ENCODE measurements at regions of chr3 and their contacts with region 1.

Region 1: DNA sequence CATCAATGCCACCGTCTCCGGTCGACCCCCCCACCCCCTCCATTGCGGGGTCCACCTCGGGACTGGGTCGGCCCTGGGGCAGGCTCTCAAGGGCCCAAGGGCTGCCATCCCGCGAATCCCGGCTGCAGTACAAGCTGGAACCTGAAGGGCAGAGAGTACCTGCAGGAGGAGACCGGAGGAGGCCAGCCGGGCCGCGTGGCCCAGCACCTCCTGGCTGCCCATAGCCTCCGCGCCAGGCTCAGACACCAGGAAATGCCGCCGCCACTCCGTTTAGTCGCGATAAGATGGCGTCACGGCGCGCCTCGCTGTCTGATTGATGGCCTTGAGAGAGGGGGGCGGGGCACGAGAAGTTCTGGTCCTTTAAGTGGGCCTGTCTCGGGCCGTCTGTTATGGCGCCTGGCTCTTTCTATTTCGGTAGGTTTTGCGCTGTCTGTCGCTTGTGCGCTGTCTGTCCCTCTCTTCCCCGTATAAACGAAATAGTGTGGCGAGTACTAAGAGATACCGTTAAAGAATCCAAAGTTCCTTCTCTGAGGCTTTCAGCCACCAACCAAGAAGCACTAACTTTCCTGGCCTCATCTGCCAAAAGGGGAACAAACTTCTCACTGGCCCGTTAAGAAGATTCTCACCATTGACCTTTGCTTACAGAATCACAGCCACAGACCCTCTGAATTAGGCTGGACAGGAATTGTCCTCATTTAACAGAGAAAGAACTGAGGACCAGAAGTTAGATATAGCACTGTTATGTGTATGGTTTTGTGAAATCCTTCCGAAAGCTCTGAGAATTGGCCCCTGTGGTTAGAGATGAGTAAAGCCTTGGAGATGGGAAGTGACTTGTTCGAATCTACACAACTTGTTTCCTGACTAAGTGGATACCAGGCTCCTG is at the start of gene RFT1:
- DNase-seq: peak; percentile 94 to 98 (median 96)
- ATAC-seq: peak; percentile 97
- H3K4me3 ChIP-seq: peak within 1 kb of the TSS; percentile 62
- H3K4me3 Mint-ChIP-seq: peak within 1 kb of the TSS; percentile 87 to 98 (median 92)
- H3K27ac ChIP-seq: peak within 1 kb of the TSS; percentile 82
- H3K27ac Mint-ChIP-seq: peak within 1 kb of the TSS; percentile 91 to 100 (median 98)
- H3K4me1 ChIP-seq: peaks cover 15 to 19% of the 10 kb centered on the region in 2 donors
- H3K4me1 Mint-ChIP-seq: peaks cover 14 to 39% (median 26%) of the 10 kb centered on the region in 7 donors
- H3K27me3 ChIP-seq: no peaks in the 10 kb centered on the region
- H3K27me3 Mint-ChIP-seq: no peaks in the 10 kb centered on the region
- total RNA-seq, gene RFT1: 16.0 to 32.0 (median 26.0) TPM

Region 2: GRCh38 chr3:52897130-52898122 is 233.0 kb before region 1 on chr3 and contains the start of gene STIMATE:
- CTCF ChIA-PET with region 1: no interaction called
- POLR2A ChIA-PET with region 1: no interaction called
- intact Hi-C with region 1: loop called in 1 of 2 experiments (anchors 1 kb)
- DNase-seq: peak; percentile 77 to 89 (median 86)
- ATAC-seq: peak; percentile 97
- H3K4me3 ChIP-seq: peak within 1 kb of the TSS; percentile 85
- H3K4me3 Mint-ChIP-seq: peak within 1 kb of the TSS; percentile 90 to 99 (median 95)
- H3K27ac ChIP-seq: peak within 1 kb of the TSS; percentile 72
- H3K27ac Mint-ChIP-seq: peak within 1 kb of the TSS; percentile 44 to 97 (median 86)
- H3K4me1 ChIP-seq: peaks cover 16 to 23% of the 10 kb centered on the region in 2 donors
- H3K4me1 Mint-ChIP-seq: peaks cover 37 to 51% (median 45%) of the 10 kb centered on the region in 7 donors
- H3K27me3 ChIP-seq: no peaks in the 10 kb centered on the region
- H3K27me3 Mint-ChIP-seq: no peaks in the 10 kb centered on the region
- total RNA-seq, gene STIMATE: 21.1 to 44.9 (median 34.5) TPM

Region 3: DNA sequence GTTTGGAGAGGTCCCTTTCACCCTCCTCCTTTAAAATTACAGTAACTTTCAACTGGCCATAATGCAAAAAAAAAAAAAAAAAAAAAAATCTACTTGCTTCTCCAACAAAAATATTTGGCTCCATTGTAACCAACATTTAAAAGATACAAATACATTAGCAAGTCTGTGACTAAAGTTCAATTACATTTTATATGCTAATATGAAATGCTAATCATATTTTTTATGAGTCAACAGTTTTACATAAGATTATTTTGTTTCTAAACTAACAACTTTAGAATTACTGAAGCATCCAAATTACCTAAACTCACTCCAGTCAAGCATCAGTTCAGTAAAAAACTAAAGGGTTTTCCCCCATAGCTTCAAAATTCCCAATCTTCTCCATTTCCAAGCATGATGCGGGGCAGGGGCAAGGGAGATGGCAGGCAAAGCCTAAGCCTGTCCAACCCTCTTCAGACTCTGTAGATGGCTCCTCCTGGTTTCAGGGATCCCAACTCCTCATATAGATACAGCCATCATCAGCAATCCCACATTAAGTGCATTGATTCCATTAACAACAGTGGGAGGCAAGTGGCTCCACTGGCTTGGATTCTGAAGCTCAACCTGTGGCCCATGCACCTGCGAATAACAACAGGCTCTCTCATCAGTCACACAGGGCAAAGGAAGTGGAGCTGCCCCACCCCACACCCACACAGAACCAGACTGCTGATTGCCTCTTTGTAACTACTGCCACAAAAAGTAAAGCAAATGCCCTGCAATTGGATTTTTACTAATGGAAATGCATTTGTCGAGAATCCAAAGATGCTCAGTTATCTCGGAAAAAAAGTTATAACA is 99.6 kb before region 1 on chr3:
- CTCF ChIA-PET with region 1: no interaction called
- POLR2A ChIA-PET with region 1: no interaction called
- intact Hi-C with region 1: no loop called
- DNase-seq: peak in 7 of 9 donors; percentile 23 to 53 (median 49)
- ATAC-seq: peak; percentile 84
- H3K4me3 ChIP-seq: peak overlapping the region; percentile 20
- H3K4me3 Mint-ChIP-seq: peak overlapping the region; percentile 56 to 83 (median 72)
- H3K27ac ChIP-seq: peak overlapping the region; percentile 56
- H3K27ac Mint-ChIP-seq: peak overlapping the region; percentile 54 to 93 (median 89)
- H3K4me1 ChIP-seq: peaks cover 12 to 43% of the 10 kb centered on the region in 2 donors
- H3K4me1 Mint-ChIP-seq: peaks cover 18 to 86% (median 64%) of the 10 kb centered on the region in 7 donors
- H3K27me3 ChIP-seq: no peaks in the 10 kb centered on the region
- H3K27me3 Mint-ChIP-seq: no peaks in the 10 kb centered on the region

Region 4: GRCh38 chr3:53160660-53161449 is 30.4 kb after region 1 on chr3 and contains the start of gene PRKCD:
- CTCF ChIA-PET with region 1: interaction called, 5 read pairs
- POLR2A ChIA-PET with region 1: interaction called, 5 read pairs
- intact Hi-C with region 1: loop called (anchors 1 kb)
- DNase-seq: peak; percentile 55 to 81 (median 71)
- ATAC-seq: peak; percentile 82
- H3K4me3 ChIP-seq: peak within 1 kb of the TSS; percentile 68
- H3K4me3 Mint-ChIP-seq: peak within 1 kb of the TSS; percentile 80 to 95 (median 92)
- H3K27ac ChIP-seq: peak within 1 kb of the TSS; percentile 77
- H3K27ac Mint-ChIP-seq: peak within 1 kb of the TSS; percentile 75 to 94 (median 90)
- H3K4me1 ChIP-seq: peaks cover 9 to 22% of the 10 kb centered on the region in 2 donors
- H3K4me1 Mint-ChIP-seq: peaks cover 18 to 30% (median 23%) of the 10 kb centered on the region in 7 donors
- H3K27me3 ChIP-seq: no peaks in the 10 kb centered on the region
- H3K27me3 Mint-ChIP-seq: peaks cover 0 to 40% (median 12%) of the 10 kb centered on the region in 5 donors
- total RNA-seq, gene PRKCD: 10.2 to 72.8 (median 18.7) TPM

Region 5: GRCh38 chr3:53255775-53256703 is 125.6 kb after region 1 on chr3 and contains the start of gene TKT:
- CTCF ChIA-PET with region 1: no interaction called
- POLR2A ChIA-PET with region 1: no interaction called
- intact Hi-C with region 1: loop called (anchors 1 kb)
- DNase-seq: peak; percentile 58 to 85 (median 67)
- ATAC-seq: peak; percentile 92
- H3K4me3 ChIP-seq: peak within 1 kb of the TSS; percentile 70
- H3K4me3 Mint-ChIP-seq: peak within 1 kb of the TSS; percentile 90 to 97 (median 92)
- H3K27ac ChIP-seq: peak within 1 kb of the TSS; percentile 76
- H3K27ac Mint-ChIP-seq: peak within 1 kb of the TSS; percentile 69 to 89 (median 84)
- H3K4me1 ChIP-seq: peaks cover 14% of the 10 kb centered on the region in 2 donors
- H3K4me1 Mint-ChIP-seq: peaks cover 19 to 39% (median 34%) of the 10 kb centered on the region in 7 donors
- H3K27me3 ChIP-seq: no peaks in the 10 kb centered on the region
- H3K27me3 Mint-ChIP-seq: peaks cover 0 to 4% (median 0%) of the 10 kb centered on the region in 5 donors
- total RNA-seq, gene TKT: 83.5 to 333 (median 121) TPM

Region 6: GRCh38 chr3:53891497-53892285 is 761.3 kb after region 1 on chr3 and contains the start of gene SELENOK:
- CTCF ChIA-PET with region 1: no interaction called
- POLR2A ChIA-PET with region 1: no interaction called
- intact Hi-C with region 1: loop called in 1 of 2 experiments (anchors 1 kb)
- DNase-seq: peak; percentile 84 to 98 (median 97)
- ATAC-seq: peak; percentile 97
- H3K4me3 ChIP-seq: peak within 1 kb of the TSS; percentile 81
- H3K4me3 Mint-ChIP-seq: peak within 1 kb of the TSS; percentile 89 to 98 (median 94)
- H3K27ac ChIP-seq: peak within 1 kb of the TSS; percentile 98
- H3K27ac Mint-ChIP-seq: peak within 1 kb of the TSS; percentile 97 to 99 (median 99)
- H3K4me1 ChIP-seq: peaks cover 12 to 36% of the 10 kb centered on the region in 2 donors
- H3K4me1 Mint-ChIP-seq: peaks cover 30 to 64% (median 60%) of the 10 kb centered on the region in 7 donors
- H3K27me3 ChIP-seq: no peaks in the 10 kb centered on the region
- H3K27me3 Mint-ChIP-seq: peaks cover 1 to 29% (median 17%) of the 10 kb centered on the region in 5 donors
- total RNA-seq, gene SELENOK: 33.6 to 104 (median 45.4) TPM

Measured in naive thymus-derived CD4-positive, alpha-beta T cell (primary cell).